B cell (primary cell): ENCODE measurements at regions of chr22 and their contacts with region 1.

Region 1: DNA sequence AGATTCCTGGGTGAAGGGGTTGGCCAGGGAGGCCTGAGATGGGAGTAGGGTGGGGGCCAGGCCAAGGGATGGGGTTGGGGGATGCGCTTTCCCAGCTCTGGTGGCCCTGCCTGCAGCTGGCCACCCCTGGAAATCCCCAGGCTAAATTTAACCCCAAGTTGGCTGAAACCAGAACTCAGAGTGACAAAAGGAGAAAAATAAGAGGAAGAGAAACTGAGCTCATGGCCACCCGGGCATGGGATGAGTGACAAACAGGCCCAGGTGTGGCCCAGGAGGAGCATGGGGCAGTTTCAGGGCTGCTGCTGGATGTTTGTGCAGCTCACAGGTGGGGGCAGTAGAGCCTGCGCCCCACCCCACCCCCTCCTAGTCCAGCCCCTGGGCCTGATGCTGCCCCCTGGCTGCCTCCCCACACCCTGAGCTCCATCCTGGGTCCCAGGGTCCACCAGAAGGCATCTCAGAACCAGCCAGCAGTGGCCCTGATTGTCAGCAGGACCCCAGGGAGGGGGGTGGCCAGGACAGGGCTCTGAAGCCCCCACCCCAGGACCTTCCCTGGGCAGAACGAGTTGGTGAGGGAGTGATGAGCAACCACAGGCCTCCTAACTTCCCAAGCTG is 48.0 kb downstream of the IGLL5 start:
- DNase-seq: peak; percentile 97
- ATAC-seq: peak; percentile 89
- H3K4me3 ChIP-seq: peak overlapping the region in 2 of 5 experiments; percentile 7 to 37
- H3K4me3 Mint-ChIP-seq: peak overlapping the region; percentile 71
- H3K27ac ChIP-seq: peak overlapping the region; percentile 94 to 99
- H3K27ac Mint-ChIP-seq: peak overlapping the region; percentile 95
- H3K4me1 ChIP-seq: peaks cover 98 to 100% of the 10 kb centered on the region in 2 donors
- H3K4me1 Mint-ChIP-seq: peaks cover 98% of the 10 kb centered on the region
- H3K27me3 ChIP-seq: no peaks in the 10 kb centered on the region
- H3K27me3 Mint-ChIP-seq: no peaks in the 10 kb centered on the region
- CTCF ChIP-seq: peak; percentile 75

Region 2: DNA sequence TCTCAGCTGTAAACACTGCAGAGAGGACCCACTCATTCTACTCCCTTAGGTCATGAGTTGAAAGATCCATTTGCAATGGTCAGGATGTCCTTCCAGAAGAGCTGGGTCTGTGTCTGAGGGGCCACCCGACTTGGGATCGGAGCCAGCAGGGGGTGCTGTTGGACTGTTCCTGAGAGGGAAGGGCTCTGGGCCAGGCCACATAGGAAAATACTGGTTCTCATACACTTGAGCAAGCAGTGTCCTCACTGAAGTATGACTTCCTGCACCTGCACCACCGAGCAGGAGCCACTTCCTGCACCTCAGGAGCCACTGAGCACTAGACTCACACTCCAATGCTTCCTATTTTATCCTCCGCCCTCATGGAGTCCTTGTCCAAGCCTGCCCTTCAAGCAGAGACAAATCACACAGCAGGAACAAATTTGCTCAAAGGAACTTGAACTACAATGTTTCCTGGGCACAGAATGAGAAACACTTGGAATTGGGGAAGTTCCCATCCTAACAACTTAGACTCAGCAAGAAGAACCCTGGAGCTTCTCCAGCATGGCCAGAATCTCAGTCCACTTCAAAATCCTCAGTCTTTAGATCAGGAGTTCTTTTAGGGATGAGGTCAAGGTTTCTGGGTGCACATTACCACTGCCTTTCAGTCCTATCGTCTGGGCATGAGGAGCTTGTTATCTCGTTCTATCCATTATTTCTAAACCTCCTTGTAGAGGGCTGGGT is 727.6 kb before region 1 on chr22:
- CTCF ChIA-PET with region 1: no interaction called
- POLR2A ChIA-PET with region 1: no interaction called
- intact Hi-C with region 1: loop called (anchors 5 kb)
- DNase-seq: peak; percentile 90
- ATAC-seq: peak; percentile 85
- H3K4me3 ChIP-seq: peak overlapping the region in 1 of 5 experiments; percentile 12
- H3K4me3 Mint-ChIP-seq: peak overlapping the region; percentile 67
- H3K27ac ChIP-seq: peak overlapping the region; percentile 45 to 51
- H3K27ac Mint-ChIP-seq: peak overlapping the region; percentile 93
- H3K4me1 ChIP-seq: peaks cover 53 to 57% of the 10 kb centered on the region in 2 donors
- H3K4me1 Mint-ChIP-seq: peaks cover 54% of the 10 kb centered on the region
- H3K27me3 ChIP-seq: no peaks in the 10 kb centered on the region
- H3K27me3 Mint-ChIP-seq: no peaks in the 10 kb centered on the region
- CTCF ChIP-seq: peak; percentile 89

Region 3: DNA sequence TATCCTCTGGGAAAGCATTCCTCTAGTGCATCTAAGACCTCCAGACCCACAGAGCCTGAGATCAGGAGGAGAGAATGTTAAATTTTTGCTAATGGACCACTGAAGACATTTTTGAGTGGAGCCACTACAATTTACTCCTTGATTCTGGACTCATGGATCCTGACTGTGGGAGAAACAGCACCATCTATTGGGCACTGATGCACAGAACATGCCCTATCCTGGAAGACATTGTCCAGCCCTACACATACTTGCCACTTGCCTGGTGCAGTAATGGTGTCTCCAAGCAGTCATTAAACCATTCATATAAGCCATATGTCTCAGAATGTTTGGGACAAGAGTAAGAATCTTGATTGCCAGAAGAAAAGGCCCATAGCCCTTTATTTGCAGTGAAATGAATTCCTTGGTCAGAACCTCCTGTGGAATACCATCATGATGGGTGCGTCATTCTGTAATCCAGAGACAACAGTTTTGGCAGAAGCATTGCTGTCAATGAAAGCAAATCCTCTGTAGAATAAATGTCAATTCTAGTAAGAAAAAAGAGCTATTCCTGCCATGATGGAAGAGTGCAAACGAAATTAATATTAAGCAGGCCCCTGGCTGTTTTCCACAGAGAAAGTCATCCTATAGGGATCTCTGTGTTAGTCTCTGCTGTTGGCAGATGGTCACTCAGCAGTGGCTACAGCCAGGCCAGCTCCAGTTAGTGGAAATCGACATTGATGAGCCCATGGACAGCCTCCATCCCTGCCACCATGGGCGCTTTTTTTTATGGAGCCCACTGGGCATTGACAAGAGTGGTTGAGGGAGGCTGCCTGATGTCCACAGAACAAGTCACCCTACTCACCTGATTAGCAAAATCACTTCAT is 247.8 kb before region 1 on chr22:
- CTCF ChIA-PET with region 1: interaction called, 6 read pairs
- POLR2A ChIA-PET with region 1: no interaction called
- intact Hi-C with region 1: loop called (anchors 5 kb)
- DNase-seq: peak; percentile 36
- ATAC-seq: no peak
- H3K4me3 ChIP-seq: no peak overlapping the region
- H3K4me3 Mint-ChIP-seq: peak overlapping the region; percentile 78
- H3K27ac ChIP-seq: peak overlapping the region; percentile 11 to 52
- H3K27ac Mint-ChIP-seq: peak overlapping the region; percentile 81
- H3K4me1 ChIP-seq: peaks cover 46 to 56% of the 10 kb centered on the region in 2 donors
- H3K4me1 Mint-ChIP-seq: peaks cover 54% of the 10 kb centered on the region
- H3K27me3 ChIP-seq: no peaks in the 10 kb centered on the region
- H3K27me3 Mint-ChIP-seq: no peaks in the 10 kb centered on the region
- CTCF ChIP-seq: peak; percentile 47

Region 4: GRCh38 chr22:22855617-22856308 is 79.9 kb before region 1 on chr22:
- CTCF ChIA-PET with region 1: interaction called, 91 read pairs
- POLR2A ChIA-PET with region 1: interaction called, 3 read pairs
- intact Hi-C with region 1: no loop called
- DNase-seq: peak; percentile 72
- ATAC-seq: peak; percentile 74
- H3K4me3 ChIP-seq: no peak overlapping the region
- H3K4me3 Mint-ChIP-seq: peak overlapping the region; percentile 47
- H3K27ac ChIP-seq: no peak overlapping the region
- H3K27ac Mint-ChIP-seq: peak overlapping the region; percentile 71
- H3K4me1 ChIP-seq: peaks cover 35 to 39% of the 10 kb centered on the region in 2 donors
- H3K4me1 Mint-ChIP-seq: peaks cover 34% of the 10 kb centered on the region
- H3K27me3 ChIP-seq: peaks cover 0 to 1% (median 0%) of the 10 kb centered on the region in 4 experiments
- H3K27me3 Mint-ChIP-seq: peaks cover 16% of the 10 kb centered on the region
- CTCF ChIP-seq: peak; percentile 72

Region 5: DNA sequence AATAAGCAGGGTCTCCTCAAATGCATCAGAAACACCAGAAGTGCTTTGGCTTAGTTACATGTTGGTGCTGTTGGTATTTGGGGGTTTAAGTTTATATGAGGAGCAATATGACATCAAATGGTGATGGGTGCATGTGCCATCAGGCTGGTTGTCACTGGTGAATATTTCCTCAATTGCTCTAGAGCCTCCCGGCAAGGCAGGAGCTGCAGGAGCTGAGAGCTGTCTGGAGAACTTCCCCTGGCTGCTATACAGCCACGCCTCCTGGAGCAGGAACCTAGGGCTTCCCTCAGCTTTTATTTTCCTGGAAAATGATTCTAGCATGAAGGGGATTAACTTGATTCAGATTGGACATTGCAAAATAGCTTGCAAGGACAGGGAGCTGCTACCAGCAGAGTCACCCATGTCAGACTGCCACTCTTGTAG is 32.3 kb before region 1 on chr22:
- CTCF ChIA-PET with region 1: interaction called, 38 read pairs
- POLR2A ChIA-PET with region 1: interaction called, 40 read pairs
- intact Hi-C with region 1: loop called (anchors 2 kb)
- DNase-seq: no peak
- ATAC-seq: no peak
- H3K4me3 ChIP-seq: peak overlapping the region in 1 of 5 experiments; percentile 18
- H3K4me3 Mint-ChIP-seq: peak overlapping the region; percentile 69
- H3K27ac ChIP-seq: peak overlapping the region; percentile 52 to 53
- H3K27ac Mint-ChIP-seq: peak overlapping the region; percentile 61
- H3K4me1 ChIP-seq: peaks cover 43 to 77% of the 10 kb centered on the region in 2 donors
- H3K4me1 Mint-ChIP-seq: peaks cover 69% of the 10 kb centered on the region
- H3K27me3 ChIP-seq: no peaks in the 10 kb centered on the region
- H3K27me3 Mint-ChIP-seq: no peaks in the 10 kb centered on the region
- CTCF ChIP-seq: no peak

Region 6: DNA sequence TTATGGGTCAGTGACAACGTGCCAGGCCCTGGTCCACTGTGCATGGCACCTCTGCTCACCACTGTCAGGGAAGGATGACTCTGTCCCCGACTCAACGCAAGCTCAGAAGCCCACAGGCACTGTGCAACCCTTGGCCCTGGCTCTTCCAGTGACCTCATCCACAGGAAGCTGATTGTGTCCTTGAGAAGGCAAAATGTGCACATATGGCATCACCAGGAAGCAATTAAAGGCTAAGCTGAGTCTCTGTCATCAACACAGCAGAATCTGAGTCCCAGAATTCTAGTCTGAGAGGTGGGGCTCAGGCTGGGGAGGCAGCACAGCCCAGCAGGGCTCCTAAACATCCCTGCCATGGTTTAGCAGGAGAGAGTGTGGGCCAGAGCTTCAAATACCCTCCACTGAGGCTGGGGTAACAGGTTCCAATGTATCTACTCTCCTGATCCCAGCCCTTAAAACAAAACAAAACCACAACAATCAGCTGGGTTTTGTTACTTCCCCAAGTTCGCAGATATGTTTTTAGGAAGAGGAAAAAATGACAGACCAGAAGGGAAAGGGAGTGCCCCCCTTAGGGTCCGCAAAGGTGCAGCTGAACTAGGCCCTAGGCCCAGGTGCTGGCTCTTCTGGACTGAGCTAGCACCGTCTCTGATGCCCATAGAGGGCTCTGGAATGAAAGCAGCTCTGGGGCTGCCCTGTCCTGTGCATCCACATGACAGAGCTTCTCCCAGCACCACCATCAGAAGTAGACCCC is 101.2 kb after region 1 on chr22:
- CTCF ChIA-PET with region 1: no interaction called
- POLR2A ChIA-PET with region 1: no interaction called
- intact Hi-C with region 1: no loop called
- DNase-seq: peak; percentile 25
- ATAC-seq: no peak
- H3K4me3 ChIP-seq: no peak overlapping the region
- H3K4me3 Mint-ChIP-seq: peak overlapping the region; percentile 72
- H3K27ac ChIP-seq: peak overlapping the region; percentile 83 to 86
- H3K27ac Mint-ChIP-seq: peak overlapping the region; percentile 79
- H3K4me1 ChIP-seq: peaks cover 46 to 55% of the 10 kb centered on the region in 2 donors
- H3K4me1 Mint-ChIP-seq: peaks cover 51% of the 10 kb centered on the region
- H3K27me3 ChIP-seq: no peaks in the 10 kb centered on the region
- H3K27me3 Mint-ChIP-seq: no peaks in the 10 kb centered on the region
- CTCF ChIP-seq: no peak